PC-3 (cell line): ENCODE measurements at regions of chr10 and their contacts with region 1.

Region 1: DNA sequence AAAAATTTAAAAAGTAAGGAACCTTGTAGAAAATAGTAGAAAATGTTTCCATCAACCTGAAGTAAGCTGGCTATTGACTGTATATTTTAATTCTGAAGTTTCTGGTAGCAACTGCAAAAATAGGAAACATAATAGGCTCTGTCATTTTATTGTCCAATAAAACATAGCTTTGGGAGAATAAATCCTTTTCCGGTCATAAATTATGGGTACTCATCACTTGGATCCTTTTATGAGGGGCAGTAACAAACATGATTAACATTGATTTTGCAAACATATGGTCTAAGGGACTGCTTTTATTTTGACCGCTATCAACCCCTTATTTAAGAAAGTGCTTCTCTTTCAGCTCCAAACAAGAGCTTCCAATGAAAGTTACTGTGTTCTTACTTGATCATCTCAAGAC is 495.9 kb upstream of the ANKRD30A start:
- DNase-seq: peak; percentile 76
- ATAC-seq: peak; percentile 71
- H3K4me3 ChIP-seq: no peak overlapping the region
- H3K27ac ChIP-seq: peak overlapping the region; percentile 81
- H3K4me1 ChIP-seq: peaks cover 24% of the 10 kb centered on the region
- H3K27me3 ChIP-seq: no peaks in the 10 kb centered on the region
- CTCF ChIP-seq: no peak

Region 2: GRCh38 chr10:36578306-36578705 is 51.2 kb before region 1 on chr10:
- CTCF ChIA-PET with region 1: no interaction called
- POLR2A ChIA-PET with region 1: no interaction called
- intact Hi-C with region 1: loop called (anchors 1 kb)
- DNase-seq: peak; percentile 100
- ATAC-seq: peak; percentile 96
- H3K4me3 ChIP-seq: no peak overlapping the region
- H3K27ac ChIP-seq: peak overlapping the region; percentile 84
- H3K4me1 ChIP-seq: peaks cover 19% of the 10 kb centered on the region
- H3K27me3 ChIP-seq: no peaks in the 10 kb centered on the region
- CTCF ChIP-seq: no peak

Region 3: DNA sequence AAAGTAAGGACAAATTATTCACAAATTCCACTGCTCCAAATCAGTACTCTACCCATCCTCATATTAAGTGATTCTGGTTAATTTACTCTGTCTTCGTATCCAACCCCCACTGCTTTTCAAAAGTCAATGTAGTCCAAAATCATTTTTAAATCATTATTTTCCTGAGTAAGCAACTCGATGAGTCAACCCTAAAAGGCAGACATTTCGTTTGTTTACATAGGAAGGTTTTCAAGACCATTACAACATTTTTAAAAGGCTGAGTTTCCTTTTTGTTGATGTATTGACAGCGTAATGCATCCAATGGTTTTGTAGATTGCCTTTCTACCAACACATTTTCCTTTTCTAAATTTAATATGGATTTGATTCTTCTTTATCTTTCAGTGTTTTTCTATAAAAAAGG is 27.1 kb before region 1 on chr10:
- CTCF ChIA-PET with region 1: no interaction called
- POLR2A ChIA-PET with region 1: no interaction called
- intact Hi-C with region 1: loop called (anchors 1 kb)
- DNase-seq: peak; percentile 98
- ATAC-seq: peak; percentile 71
- H3K4me3 ChIP-seq: peak overlapping the region; percentile 2; the same call in 1 of the 2 replicates
- H3K27ac ChIP-seq: peak overlapping the region; percentile 30
- H3K4me1 ChIP-seq: peaks cover 47% of the 10 kb centered on the region
- H3K27me3 ChIP-seq: no peaks in the 10 kb centered on the region
- CTCF ChIP-seq: no peak

Region 4: DNA sequence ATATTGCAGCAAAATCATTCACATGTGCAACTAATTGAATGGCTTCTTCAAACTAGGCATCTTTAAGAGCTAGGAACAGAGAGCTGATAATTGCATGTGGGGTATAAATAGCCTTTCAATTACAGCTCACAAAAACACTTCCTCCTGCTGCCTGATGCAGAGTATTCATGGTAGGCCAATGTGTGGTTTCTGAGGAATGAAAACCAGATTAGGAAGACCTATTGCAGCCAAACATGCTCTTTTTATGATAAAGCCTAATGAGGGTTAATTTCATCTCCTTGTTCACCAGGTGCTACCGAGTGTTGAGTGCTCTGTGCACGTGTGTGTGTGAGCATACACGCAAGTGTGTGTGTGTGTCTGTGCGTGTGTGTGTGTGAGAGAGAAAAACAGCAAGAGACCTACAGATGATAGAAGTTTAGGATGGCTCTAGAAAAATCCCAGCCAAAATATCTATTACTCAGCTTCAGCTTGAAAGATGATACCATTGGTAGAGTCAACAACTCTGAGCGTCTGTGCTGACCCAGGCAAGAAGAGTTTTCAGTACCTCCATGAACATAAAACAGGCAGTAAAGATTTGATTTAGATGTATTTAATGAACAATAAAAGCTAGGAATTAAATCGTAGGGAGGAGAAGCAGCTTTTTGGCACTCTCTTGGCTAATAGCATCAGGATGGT is 47.4 kb after region 1 on chr10:
- CTCF ChIA-PET with region 1: no interaction called
- POLR2A ChIA-PET with region 1: no interaction called
- intact Hi-C with region 1: loop called (anchors 2 kb)
- DNase-seq: peak; percentile 90
- ATAC-seq: peak; percentile 72
- H3K4me3 ChIP-seq: no peak overlapping the region
- H3K27ac ChIP-seq: peak overlapping the region; percentile 47
- H3K4me1 ChIP-seq: peaks cover 47% of the 10 kb centered on the region
- H3K27me3 ChIP-seq: no peaks in the 10 kb centered on the region
- CTCF ChIP-seq: no peak

Region 5: DNA sequence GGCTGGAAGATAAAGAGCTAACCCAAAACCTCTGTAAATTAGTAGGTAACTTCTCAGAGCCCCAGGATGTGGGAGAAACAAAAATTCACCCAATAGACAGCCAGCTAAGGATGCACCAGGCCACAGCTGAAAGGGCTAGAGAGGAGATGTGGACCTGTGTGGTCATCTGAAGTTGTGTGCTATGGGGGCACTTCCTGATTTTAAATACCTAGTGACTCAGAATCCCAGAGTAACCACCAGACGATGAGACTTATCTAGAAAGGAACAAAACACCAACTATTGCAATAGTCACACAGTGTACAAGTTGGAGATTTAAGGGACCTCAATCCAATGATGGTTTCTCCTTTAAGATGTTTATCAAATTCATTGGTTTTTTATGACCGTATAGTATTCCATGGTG is 87.6 kb after region 1 on chr10:
- CTCF ChIA-PET with region 1: no interaction called
- POLR2A ChIA-PET with region 1: no interaction called
- intact Hi-C with region 1: loop called (anchors 1 kb)
- DNase-seq: peak; percentile 82
- ATAC-seq: peak; percentile 69
- H3K4me3 ChIP-seq: no peak overlapping the region
- H3K27ac ChIP-seq: peak overlapping the region; percentile 80
- H3K4me1 ChIP-seq: peaks cover 40% of the 10 kb centered on the region
- H3K27me3 ChIP-seq: no peaks in the 10 kb centered on the region
- CTCF ChIP-seq: no peak